Calu3 (cell line): ENCODE measurements at regions of chr22 and their contacts with region 1.

Region 1: DNA sequence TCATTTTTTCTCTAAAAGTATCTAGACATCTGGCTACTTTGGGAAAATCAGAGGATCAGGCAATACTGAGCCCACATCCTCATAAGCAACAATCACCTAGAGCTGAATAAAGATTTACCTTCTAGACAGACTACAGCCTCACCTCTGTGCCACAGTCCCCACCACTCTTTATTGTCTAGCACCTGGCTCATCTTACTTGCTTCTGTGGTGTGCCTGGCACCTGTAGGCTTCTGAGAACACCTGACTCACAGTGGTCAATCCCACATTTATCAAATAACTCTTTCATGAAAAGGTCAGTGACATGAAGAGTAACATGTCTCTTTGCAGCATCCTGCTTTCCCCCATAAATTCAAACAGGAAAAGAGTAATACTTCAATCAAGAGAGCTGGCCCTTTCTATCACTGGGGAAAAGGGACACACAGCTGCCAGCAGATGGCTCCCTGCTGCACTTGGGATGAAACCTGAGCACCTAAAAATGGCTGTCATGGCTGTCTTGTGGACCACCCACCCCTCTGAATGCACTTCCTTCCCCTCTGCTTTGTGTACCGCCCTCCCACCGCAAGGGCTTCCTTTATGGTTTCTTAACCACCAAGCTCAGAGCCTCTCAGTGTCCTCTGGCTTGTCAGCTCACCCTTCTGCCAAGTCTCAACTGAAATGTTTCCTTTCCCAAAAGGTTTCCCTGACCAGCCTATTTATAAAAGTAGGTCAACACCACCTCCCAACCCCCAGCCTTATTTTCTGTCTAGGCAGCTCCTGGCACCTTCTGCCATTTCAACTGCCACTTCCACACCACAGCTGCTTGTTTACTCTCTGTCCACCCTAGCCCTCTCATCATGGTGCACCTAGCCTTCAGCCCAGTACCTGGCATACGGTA is 9.3 kb downstream of the TFIP11 start:
- DNase-seq: peak; percentile 14
- H3K4me3 Mint-ChIP-seq: no peak overlapping the region
- H3K27ac Mint-ChIP-seq: no peak overlapping the region
- H3K4me1 Mint-ChIP-seq: no peaks in the 10 kb centered on the region
- H3K27me3 Mint-ChIP-seq: no peaks in the 10 kb centered on the region
- CTCF ChIP-seq: peak; percentile 61

Region 2: GRCh38 chr22:25475257-25476022 is 1027.5 kb before region 1 on chr22:
- CTCF ChIA-PET with region 1: interaction called, 10 read pairs
- intact Hi-C with region 1: no loop called
- DNase-seq: no peak
- H3K4me3 Mint-ChIP-seq: no peak overlapping the region
- H3K27ac Mint-ChIP-seq: no peak overlapping the region
- H3K4me1 Mint-ChIP-seq: no peaks in the 10 kb centered on the region
- H3K27me3 Mint-ChIP-seq: no peaks in the 10 kb centered on the region
- CTCF ChIP-seq: no peak

Region 3: DNA sequence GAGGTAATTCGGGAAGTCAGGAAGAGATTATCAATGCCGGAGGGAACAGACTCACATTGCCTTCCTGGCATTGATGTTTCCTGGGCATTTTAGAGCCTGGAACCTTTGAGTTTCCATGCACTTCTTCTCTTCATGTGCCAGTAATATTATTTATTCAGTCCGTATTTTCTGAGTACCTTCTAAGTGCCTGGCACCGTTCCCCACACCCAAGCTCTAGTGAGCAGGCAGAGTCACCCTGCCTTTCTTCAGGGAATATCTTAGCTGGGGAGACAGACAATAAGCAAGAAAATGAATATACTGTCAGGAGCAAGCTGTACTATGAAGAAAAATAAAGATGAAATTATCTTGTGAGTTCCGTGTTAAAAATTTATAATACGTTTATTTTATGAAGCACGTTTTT is 469.9 kb before region 1 on chr22:
- CTCF ChIA-PET with region 1: no interaction called
- intact Hi-C with region 1: no loop called
- DNase-seq: no peak
- H3K4me3 Mint-ChIP-seq: no peak overlapping the region
- H3K27ac Mint-ChIP-seq: no peak overlapping the region
- H3K4me1 Mint-ChIP-seq: no peaks in the 10 kb centered on the region
- H3K27me3 Mint-ChIP-seq: peaks cover 31% of the 10 kb centered on the region
- CTCF ChIP-seq: no peak

Region 4: GRCh38 chr22:26377170-26377830 is 125.6 kb before region 1 on chr22:
- CTCF ChIA-PET with region 1: no interaction called
- intact Hi-C with region 1: no loop called
- DNase-seq: no peak
- H3K4me3 Mint-ChIP-seq: no peak overlapping the region
- H3K27ac Mint-ChIP-seq: no peak overlapping the region
- H3K4me1 Mint-ChIP-seq: peaks cover 8% of the 10 kb centered on the region
- H3K27me3 Mint-ChIP-seq: peaks cover 100% of the 10 kb centered on the region
- CTCF ChIP-seq: no peak

Region 5: DNA sequence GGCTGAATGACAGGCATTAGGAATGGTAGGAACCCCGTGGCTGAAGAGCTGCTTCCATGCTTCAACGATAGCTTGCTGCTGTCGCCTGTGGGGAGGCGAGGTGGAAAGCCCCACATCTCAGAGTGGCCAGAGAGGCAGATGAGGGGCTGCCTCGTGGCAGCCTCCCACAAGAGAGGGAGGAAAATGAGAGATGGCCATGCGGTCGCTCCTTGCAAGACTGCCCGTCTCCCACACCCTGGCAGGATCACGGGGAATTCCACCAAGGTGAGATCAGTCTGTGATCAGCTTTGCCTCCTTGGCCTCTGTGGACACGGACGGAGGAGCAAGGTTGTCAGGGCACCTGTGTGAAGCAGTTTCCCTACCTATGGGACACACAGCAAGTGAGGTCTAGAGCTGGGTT is 121.9 kb after region 1 on chr22:
- CTCF ChIA-PET with region 1: interaction called, 10 read pairs
- intact Hi-C with region 1: no loop called
- DNase-seq: no peak
- H3K4me3 Mint-ChIP-seq: no peak overlapping the region
- H3K27ac Mint-ChIP-seq: no peak overlapping the region
- H3K4me1 Mint-ChIP-seq: no peaks in the 10 kb centered on the region
- H3K27me3 Mint-ChIP-seq: peaks cover 62% of the 10 kb centered on the region
- CTCF ChIP-seq: no peak